HCT116 (cell line): ENCODE measurements at regions of chr6 and their contacts with region 1.

Region 1: DNA sequence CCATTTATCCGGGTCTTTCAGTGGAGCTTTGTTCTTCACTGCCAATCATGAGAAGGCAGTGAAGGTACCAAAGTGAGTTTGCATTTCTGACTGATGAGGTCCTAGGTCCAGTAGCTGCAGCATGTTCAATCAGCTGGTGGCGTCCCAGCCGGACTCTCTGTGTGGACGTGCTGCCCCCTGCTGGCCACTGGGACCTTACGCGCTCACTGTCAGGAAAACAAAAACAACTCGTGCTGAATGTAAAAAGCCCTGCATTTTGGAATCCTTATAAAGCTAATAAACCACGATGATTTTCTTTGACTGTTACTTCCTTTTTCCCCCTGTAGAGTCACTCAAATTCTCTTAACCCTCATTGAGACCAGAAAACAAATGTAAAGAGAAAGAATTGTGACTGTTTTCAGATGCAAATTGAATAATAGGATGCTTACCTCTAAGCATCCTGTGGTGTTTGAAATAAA is 4.9 kb upstream of the CD24 start:
- DNase-seq: peak; percentile 71
- ATAC-seq: peak; percentile 62
- H3K4me3 ChIP-seq: no peak overlapping the region
- H3K27ac ChIP-seq: no peak overlapping the region
- H3K4me1 ChIP-seq: peaks cover 5 to 15% of the 10 kb centered on the region in 2 experiments; a peak in 3 of 4 replicates
- H3K27me3 ChIP-seq: no peaks in the 10 kb centered on the region
- CTCF ChIP-seq: peak; percentile 92 to 99 (median 96)
- POLR2A ChIP-seq: no peak
- RAD21 ChIP-seq: peak; percentile 97

Region 2: GRCh38 chr6:106444777-106445507 is 534.5 kb before region 1 on chr6:
- CTCF ChIA-PET with region 1: interaction called, 6 read pairs
- POLR2A ChIA-PET with region 1: no interaction called
- RAD21 ChIA-PET with region 1: interaction called in 1 of 2 experiments, 3 read pairs
- intact Hi-C with region 1: loop called (anchors 1 kb)
- DNase-seq: peak; percentile 45
- ATAC-seq: peak; percentile 87
- H3K4me3 ChIP-seq: no peak overlapping the region
- H3K27ac ChIP-seq: no peak overlapping the region
- H3K4me1 ChIP-seq: no peaks in the 10 kb centered on the region
- H3K27me3 ChIP-seq: no peaks in the 10 kb centered on the region
- CTCF ChIP-seq: peak; percentile 66 to 76 (median 74)
- POLR2A ChIP-seq: no peak
- RAD21 ChIP-seq: peak; percentile 75

Region 3: GRCh38 chr6:106561686-106562405 is 417.6 kb before region 1 on chr6:
- CTCF ChIA-PET with region 1: interaction called, 12 read pairs
- POLR2A ChIA-PET with region 1: no interaction called
- RAD21 ChIA-PET with region 1: interaction called, 10 to 15 read pairs
- intact Hi-C with region 1: loop called (anchors 2 kb)
- DNase-seq: no peak
- ATAC-seq: 0 out of 2 replicates have a peak, but pooled peaks have one; percentile 28
- H3K4me3 ChIP-seq: no peak overlapping the region
- H3K27ac ChIP-seq: peak overlapping the region; percentile 40; the same call in 1 of the 2 replicates
- H3K4me1 ChIP-seq: peaks cover 33 to 36% of the 10 kb centered on the region in 2 experiments
- H3K27me3 ChIP-seq: no peaks in the 10 kb centered on the region
- CTCF ChIP-seq: no peak
- POLR2A ChIP-seq: no peak
- RAD21 ChIP-seq: no peak

Region 4: GRCh38 chr6:106608062-106608668 is 371.3 kb before region 1 on chr6:
- CTCF ChIA-PET with region 1: interaction called, 22 read pairs
- POLR2A ChIA-PET with region 1: no interaction called
- RAD21 ChIA-PET with region 1: interaction called in 1 of 2 experiments, 6 read pairs
- intact Hi-C with region 1: loop called (anchors 1 kb)
- DNase-seq: peak; percentile 64
- ATAC-seq: peak; percentile 91
- H3K4me3 ChIP-seq: no peak overlapping the region
- H3K27ac ChIP-seq: no peak overlapping the region
- H3K4me1 ChIP-seq: no peaks in the 10 kb centered on the region
- H3K27me3 ChIP-seq: no peaks in the 10 kb centered on the region
- CTCF ChIP-seq: peak; percentile 57 to 68 (median 60); a peak in 5 of 6 replicates
- POLR2A ChIP-seq: no peak
- RAD21 ChIP-seq: peak; percentile 61

Region 5: GRCh38 chr6:106807947-106808611 is 171.4 kb before region 1 on chr6:
- CTCF ChIA-PET with region 1: interaction called, 19 read pairs
- POLR2A ChIA-PET with region 1: no interaction called
- RAD21 ChIA-PET with region 1: no interaction called
- intact Hi-C with region 1: loop called (anchors 2 kb)
- DNase-seq: no peak
- ATAC-seq: peak; percentile 65
- H3K4me3 ChIP-seq: no peak overlapping the region
- H3K27ac ChIP-seq: no peak overlapping the region
- H3K4me1 ChIP-seq: no peaks in the 10 kb centered on the region
- H3K27me3 ChIP-seq: no peaks in the 10 kb centered on the region
- CTCF ChIP-seq: peak; percentile 34 to 49 (median 43); a peak in 5 of 6 replicates
- POLR2A ChIP-seq: no peak
- RAD21 ChIP-seq: peak; percentile 55

Region 6: GRCh38 chr6:106883808-106884262 is 95.6 kb before region 1 on chr6:
- CTCF ChIA-PET with region 1: interaction called, 4 read pairs
- POLR2A ChIA-PET with region 1: no interaction called
- RAD21 ChIA-PET with region 1: interaction called in 1 of 2 experiments, 3 read pairs
- intact Hi-C with region 1: loop called (anchors 5 kb)
- DNase-seq: no peak
- ATAC-seq: peak; percentile 90
- H3K4me3 ChIP-seq: no peak overlapping the region
- H3K27ac ChIP-seq: no peak overlapping the region
- H3K4me1 ChIP-seq: peaks cover 8 to 20% of the 10 kb centered on the region in 2 experiments; a peak in 3 of 4 replicates
- H3K27me3 ChIP-seq: no peaks in the 10 kb centered on the region
- CTCF ChIP-seq: peak; percentile 26 to 58 (median 47); a peak in 5 of 6 replicates
- POLR2A ChIP-seq: no peak
- RAD21 ChIP-seq: peak; percentile 44; the same call in 1 of the 2 replicates

Region 7: DNA sequence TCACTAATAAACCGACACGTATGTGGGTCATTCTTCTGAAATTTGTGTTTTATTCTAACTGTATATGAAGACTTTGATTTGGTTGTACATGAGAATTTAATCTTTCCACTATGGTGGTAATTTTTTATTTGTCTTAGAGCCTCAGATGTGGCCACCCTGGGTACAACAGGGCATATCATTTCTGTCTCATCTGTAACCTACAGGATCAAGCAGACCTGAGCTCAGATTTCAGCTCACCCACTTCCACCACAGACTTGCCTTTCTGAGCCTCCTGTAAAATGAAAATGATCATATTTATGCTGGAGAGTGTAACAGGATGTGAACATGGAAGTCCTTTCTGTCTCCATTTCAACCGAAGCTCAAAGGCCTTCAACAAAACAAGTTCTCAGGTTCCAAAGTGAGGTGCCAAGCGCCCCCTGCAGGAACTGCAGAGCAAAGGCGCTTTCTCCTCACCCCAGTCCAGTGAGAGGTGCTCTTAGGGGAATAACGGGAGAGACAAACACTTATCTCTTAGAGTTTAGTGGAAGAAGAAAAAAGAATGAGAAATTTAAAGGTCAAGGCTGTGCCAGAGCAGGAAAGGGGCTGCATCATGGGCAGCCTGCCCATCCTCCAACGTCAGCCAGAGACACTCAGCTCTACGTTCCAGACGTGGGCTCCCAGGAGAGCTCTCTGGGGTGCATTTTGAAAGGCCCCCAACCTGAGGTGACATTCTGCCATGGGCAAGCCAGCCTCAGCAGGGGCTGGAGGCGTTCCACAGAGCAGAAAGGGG is 18.1 kb after region 1 on chr6:
- CTCF ChIA-PET with region 1: interaction called, 15 read pairs
- POLR2A ChIA-PET with region 1: no interaction called
- RAD21 ChIA-PET with region 1: interaction called in 1 of 2 experiments, 3 read pairs
- intact Hi-C with region 1: no loop called
- DNase-seq: peak; percentile 47
- ATAC-seq: peak; percentile 93
- H3K4me3 ChIP-seq: no peak overlapping the region
- H3K27ac ChIP-seq: no peak overlapping the region
- H3K4me1 ChIP-seq: peaks cover 0 to 5% of the 10 kb centered on the region in 2 experiments; a peak in 1 of 4 replicates
- H3K27me3 ChIP-seq: no peaks in the 10 kb centered on the region
- CTCF ChIP-seq: peak; percentile 72 to 99 (median 98); a peak in 5 of 6 replicates
- POLR2A ChIP-seq: no peak
- RAD21 ChIP-seq: peak; percentile 82